Left colon (tissue), 2 donors: ENCODE measurements at regions of chr4 and their contacts with region 1.

Region 1: DNA sequence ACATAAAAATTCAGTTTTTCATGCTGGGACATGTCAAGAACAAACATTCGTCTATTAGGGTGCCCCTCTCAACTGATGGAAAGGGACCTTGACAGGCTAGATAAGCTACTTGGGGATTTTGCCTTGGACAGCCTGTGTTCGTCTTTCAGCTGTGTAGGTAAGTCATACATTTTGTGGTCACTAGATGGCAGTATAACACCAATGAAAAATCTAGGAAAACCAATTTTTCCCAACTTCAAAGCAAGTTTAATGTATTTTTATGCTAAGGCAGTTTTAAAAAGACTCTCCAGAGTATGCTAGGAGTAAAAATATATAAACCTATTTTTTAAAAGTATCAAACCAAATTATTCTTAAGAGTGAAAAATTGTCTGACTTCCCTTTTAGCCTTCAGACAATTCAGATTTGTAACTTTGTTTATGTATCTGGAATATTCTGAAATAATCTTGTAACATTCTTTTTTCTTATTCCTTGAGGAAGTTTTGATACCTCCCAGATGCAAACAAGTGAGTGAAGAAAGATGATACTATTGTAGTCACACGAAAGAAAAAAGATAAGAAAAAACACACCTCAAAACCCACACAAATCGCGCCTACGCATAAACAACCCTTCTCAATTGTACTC is 158.3 kb downstream of the CPE start:
- DNase-seq: no peak
- ATAC-seq: peak; percentile 49

Region 2: DNA sequence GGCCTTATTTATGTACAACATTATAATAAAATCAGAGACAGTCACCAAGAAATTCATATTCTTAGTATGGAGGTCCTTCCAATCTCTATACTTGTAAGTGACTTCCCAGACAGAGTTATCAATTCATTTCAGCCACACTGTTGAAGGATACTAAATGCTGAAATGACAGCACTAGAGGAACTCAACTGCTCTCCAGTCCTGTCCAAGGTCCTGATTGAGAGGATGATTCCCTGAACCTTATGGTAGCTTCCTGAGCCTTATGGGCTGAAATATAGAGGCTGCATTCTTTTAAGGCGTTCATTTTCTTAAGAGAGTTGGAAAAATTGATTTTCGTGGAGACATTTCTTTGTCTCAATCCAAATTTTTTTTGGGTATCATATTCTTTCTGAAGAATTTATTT is 541.8 kb after region 1 on chr4:
- intact Hi-C with region 1: loop called in 1 of 2 experiments (anchors 10 kb)
- DNase-seq: no peak
- ATAC-seq: no peak

Region 3: DNA sequence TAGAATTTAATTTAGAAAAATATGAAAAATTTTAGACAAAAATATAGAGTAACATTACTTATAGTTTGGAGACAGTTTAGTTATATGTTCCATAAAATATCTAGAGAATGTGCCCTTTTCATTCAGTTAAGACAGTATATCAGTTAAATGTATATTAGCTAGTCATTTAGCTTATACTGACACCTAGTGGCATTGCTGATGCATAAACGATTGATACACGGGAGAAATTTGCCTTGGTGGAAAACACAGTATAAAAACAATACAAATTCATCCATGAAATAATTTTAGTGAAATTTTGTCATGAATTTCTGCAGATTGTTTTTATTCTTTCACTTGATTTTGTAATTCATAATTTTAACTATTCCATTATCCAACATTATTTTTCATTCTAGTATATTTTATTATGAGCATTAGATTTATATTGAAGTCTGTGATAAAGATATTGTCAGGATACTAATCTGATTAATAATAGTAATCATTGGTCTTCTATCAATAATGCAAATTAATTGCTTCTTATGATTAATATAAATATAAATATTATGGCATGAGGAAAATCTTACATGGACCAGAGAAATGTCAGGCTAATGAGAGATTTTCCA is 554.9 kb after region 1 on chr4:
- intact Hi-C with region 1: loop called in 1 of 2 experiments (anchors 2 kb)
- DNase-seq: no peak
- ATAC-seq: peak; percentile 50

Region 4: GRCh38 chr4:166202991-166203390 is 665.9 kb after region 1 on chr4:
- intact Hi-C with region 1: no loop called
- DNase-seq: no peak
- ATAC-seq: no peak